Heart left ventricle (tissue), 16 donors: ENCODE measurements at regions of chr10 and their contacts with region 1.

Region 1: DNA sequence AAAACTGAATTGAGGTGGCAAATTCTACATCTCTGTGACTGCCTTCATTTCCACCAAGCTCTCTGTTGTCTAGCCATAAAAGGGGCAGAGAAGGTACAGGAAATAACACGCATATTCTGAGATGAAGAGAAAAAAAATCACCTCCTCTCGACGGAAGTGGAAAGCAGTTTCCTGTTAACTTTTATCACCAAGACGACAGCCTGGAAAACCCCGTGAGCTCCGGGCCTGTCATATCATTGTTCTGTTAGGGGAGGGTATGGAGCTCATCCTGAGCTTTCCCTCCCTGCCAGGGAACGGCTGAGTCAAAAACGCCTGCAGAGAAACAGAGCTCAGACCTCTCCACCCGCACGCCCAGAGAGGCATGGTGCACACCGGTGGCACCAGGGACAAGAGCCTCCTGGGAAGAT is 200.3 kb downstream of the PRPF18 start:
- DNase-seq: peak in 3 of 5 donors; percentile 27 to 39 (median 29)
- ATAC-seq: peak in 2 of 4 donors; percentile 15 to 61
- H3K4me3 ChIP-seq: peak overlapping the region in 1 of 12 donors; percentile 25
- H3K27ac ChIP-seq: peak overlapping the region in 9 of 12 donors; percentile 3 to 81 (median 20)
- H3K4me1 ChIP-seq: peaks cover 3 to 47% (median 28%) of the 10 kb centered on the region in 12 donors
- H3K27me3 ChIP-seq: no peaks in the 10 kb centered on the region
- CTCF ChIP-seq: no peak
- POLR2A ChIP-seq: no peak

Region 2: DNA sequence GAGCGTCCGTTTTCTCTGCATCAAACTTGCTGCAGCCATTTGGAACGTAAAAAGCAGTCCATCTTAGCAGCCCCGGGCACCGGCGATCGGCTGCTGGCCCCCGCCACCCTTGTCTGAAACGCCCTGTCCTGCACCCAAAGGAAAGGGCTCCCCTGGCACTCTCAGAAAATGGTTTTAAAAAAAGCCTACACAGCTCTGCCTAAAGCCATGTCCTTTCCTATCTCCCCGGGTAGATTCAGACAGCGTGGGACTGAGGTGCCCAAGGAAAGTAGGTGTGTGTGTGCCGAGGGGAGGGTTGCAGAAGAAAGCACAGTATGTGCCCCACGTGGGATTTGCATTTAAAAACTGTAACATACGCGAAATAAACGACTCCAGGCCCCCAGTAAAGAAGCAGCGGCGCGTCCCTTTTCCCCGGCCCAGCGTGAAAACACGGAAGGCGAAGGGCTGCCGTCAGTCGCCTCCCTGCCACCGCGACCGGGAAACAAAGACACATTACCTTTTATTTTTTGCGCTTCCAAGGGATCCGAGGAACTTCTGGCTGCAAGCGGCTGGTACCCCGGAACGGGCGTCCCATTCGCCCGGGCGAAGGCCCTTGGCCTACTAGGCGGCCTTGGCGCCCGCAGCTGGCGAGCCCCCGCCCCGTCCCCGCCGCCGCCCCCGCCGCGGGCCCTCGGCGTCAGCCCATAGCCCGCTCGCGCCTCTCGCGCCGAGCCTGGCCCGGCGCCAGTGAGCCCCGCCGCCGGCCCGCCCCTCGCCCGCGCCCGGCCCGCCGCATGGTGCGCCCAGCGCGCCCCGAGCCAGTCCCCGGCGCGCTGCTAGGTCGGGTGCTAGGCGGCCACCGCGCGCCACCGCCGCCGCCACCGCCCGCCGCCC is 104.3 kb after region 1 on chr10:
- intact Hi-C with region 1: loop called in 4 of 10 experiments (anchors 5 to 10 kb)
- DNase-seq: peak in 3 of 5 donors; percentile 35 to 70 (median 40)
- ATAC-seq: peak in 3 of 4 donors; percentile 37 to 66 (median 41)
- H3K4me3 ChIP-seq: peak overlapping the region; percentile 39 to 85 (median 65)
- H3K27ac ChIP-seq: peak overlapping the region; percentile 21 to 86 (median 76)
- H3K4me1 ChIP-seq: peaks cover 0 to 60% (median 22%) of the 10 kb centered on the region in 12 donors
- H3K27me3 ChIP-seq: peaks cover 0 to 30% (median 0%) of the 10 kb centered on the region in 9 donors
- CTCF ChIP-seq: no peak
- POLR2A ChIP-seq: no peak

Region 3: GRCh38 chr10:13971601-13972475 is 184.8 kb after region 1 on chr10:
- intact Hi-C with region 1: loop called in 1 of 10 experiments (anchors 10 kb)
- DNase-seq: no peak
- ATAC-seq: no peak
- H3K4me3 ChIP-seq: peak overlapping the region in 2 of 12 donors; percentile 12 to 17
- H3K27ac ChIP-seq: no peak overlapping the region
- H3K4me1 ChIP-seq: peaks cover 0 to 13% (median 0%) of the 10 kb centered on the region in 12 donors
- H3K27me3 ChIP-seq: peaks cover 0 to 6% (median 0%) of the 10 kb centered on the region in 9 donors
- CTCF ChIP-seq: no peak
- POLR2A ChIP-seq: no peak

Region 4: DNA sequence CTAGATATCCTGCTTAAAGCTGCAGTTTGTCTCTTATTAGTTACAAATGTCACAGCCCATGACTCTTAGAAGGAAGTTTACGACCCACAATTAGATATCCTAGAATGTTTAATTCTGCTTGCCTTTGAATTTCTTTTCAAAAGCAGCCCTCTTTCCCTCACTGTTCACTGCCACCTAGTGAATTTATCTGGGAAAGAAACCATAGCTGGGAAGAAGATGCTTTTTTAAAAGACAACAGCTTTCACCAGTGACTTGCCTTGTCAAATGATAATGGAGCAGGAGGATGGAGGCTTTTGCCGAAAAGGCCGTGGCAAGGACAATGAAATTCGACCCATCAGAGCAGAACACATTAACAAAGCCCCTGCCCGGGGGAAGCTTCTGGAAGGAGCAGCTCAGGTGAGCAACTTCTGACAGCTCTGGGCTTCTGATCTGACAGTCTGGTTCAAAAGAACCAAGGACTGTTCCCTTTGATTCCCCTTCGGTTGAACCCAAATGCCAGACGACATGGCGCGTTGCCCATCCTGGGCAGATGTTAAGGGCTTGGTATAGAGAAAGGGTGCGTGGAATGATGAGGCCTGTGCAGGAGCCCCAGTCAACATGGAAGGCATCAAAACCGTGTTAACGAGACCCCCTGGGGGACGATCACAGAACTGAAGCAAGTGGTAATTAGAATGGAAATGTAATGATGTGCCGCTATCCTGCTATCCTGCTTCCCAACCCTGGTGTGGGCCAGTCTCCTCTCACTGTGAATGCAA is 306.9 kb after region 1 on chr10:
- intact Hi-C with region 1: loop called (anchors 1 to 5 kb)
- DNase-seq: no peak
- ATAC-seq: peak in 1 of 4 donors; percentile 53
- H3K4me3 ChIP-seq: no peak overlapping the region
- H3K27ac ChIP-seq: no peak overlapping the region
- H3K4me1 ChIP-seq: peaks cover 0 to 10% (median 4%) of the 10 kb centered on the region in 12 donors
- H3K27me3 ChIP-seq: no peaks in the 10 kb centered on the region
- CTCF ChIP-seq: peak; percentile 36 to 69 (median 55)
- POLR2A ChIP-seq: no peak

Region 5: DNA sequence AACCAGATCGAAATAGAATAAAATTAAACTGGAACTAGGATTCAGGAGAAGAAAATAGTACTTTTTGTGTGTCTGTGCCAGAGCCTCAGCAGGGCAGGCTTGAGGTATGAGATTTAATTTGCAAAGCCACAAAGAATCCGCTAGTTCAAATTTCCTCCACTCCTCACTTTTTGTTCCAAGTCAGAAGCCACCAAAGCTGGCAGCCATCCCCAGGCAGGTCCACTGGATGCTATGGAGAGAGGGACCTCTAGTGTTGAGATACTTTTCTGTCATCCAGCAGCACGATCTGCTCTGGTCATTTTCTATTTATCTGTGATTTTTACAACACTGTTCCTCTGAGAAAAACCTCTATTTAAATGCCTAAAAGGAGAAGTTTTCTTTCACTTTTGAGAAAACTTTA is 691.6 kb after region 1 on chr10:
- intact Hi-C with region 1: loop called (anchors 1 to 10 kb)
- DNase-seq: peak; percentile 60 to 76 (median 73)
- ATAC-seq: peak in 3 of 4 donors; percentile 72 to 82 (median 81)
- H3K4me3 ChIP-seq: no peak overlapping the region
- H3K27ac ChIP-seq: no peak overlapping the region
- H3K4me1 ChIP-seq: peaks cover 0 to 14% (median 0%) of the 10 kb centered on the region in 12 donors
- H3K27me3 ChIP-seq: peaks cover 0 to 4% (median 0%) of the 10 kb centered on the region in 9 donors
- CTCF ChIP-seq: peak; percentile 39 to 79 (median 65)
- POLR2A ChIP-seq: no peak